Psoas muscle (tissue), 8 donors: ENCODE measurements at regions of chr5 and their contacts with region 1.

Region 1: GRCh38 chr5:30479696-30480095 is 713.8 kb upstream of the CDH6 start:
- DNase-seq: no peak
- ATAC-seq: no peak
- H3K4me3 ChIP-seq: no peak overlapping the region
- H3K27ac ChIP-seq: no peak overlapping the region
- H3K4me1 ChIP-seq: no peaks in the 10 kb centered on the region
- H3K27me3 ChIP-seq: no peaks in the 10 kb centered on the region
- CTCF ChIP-seq: no peak

Region 2: GRCh38 chr5:29642601-29643000 is 837.1 kb before region 1 on chr5:
- intact Hi-C with region 1: no loop called
- DNase-seq: no peak
- ATAC-seq: no peak
- H3K4me3 ChIP-seq: no peak overlapping the region
- H3K27ac ChIP-seq: no peak overlapping the region
- H3K4me1 ChIP-seq: no peaks in the 10 kb centered on the region
- H3K27me3 ChIP-seq: no peaks in the 10 kb centered on the region
- CTCF ChIP-seq: no peak

Region 3: GRCh38 chr5:30523061-30523460 is 43.4 kb after region 1 on chr5:
- intact Hi-C with region 1: loop called in 1 of 2 experiments (anchors 10 kb)
- DNase-seq: no peak
- ATAC-seq: no peak
- H3K4me3 ChIP-seq: no peak overlapping the region
- H3K27ac ChIP-seq: no peak overlapping the region
- H3K4me1 ChIP-seq: no peaks in the 10 kb centered on the region
- H3K27me3 ChIP-seq: no peaks in the 10 kb centered on the region
- CTCF ChIP-seq: no peak